HEK293 (cell line): ENCODE measurements at regions of chr16 and their contacts with region 1.

Region 1: GRCh38 chr16:10579965-10580882 is at the start of gene EMP2:
- H3K4me3 ChIP-seq: peak within 1 kb of the TSS; percentile 74
- H3K27ac ChIP-seq: peak within 1 kb of the TSS; percentile 74; the same call in 1 of the 2 replicates
- H3K4me1 ChIP-seq: peaks cover 5% of the 10 kb centered on the region; the same call in 1 of the 2 replicates
- CTCF ChIP-seq: peak; percentile 75

Region 2: DNA sequence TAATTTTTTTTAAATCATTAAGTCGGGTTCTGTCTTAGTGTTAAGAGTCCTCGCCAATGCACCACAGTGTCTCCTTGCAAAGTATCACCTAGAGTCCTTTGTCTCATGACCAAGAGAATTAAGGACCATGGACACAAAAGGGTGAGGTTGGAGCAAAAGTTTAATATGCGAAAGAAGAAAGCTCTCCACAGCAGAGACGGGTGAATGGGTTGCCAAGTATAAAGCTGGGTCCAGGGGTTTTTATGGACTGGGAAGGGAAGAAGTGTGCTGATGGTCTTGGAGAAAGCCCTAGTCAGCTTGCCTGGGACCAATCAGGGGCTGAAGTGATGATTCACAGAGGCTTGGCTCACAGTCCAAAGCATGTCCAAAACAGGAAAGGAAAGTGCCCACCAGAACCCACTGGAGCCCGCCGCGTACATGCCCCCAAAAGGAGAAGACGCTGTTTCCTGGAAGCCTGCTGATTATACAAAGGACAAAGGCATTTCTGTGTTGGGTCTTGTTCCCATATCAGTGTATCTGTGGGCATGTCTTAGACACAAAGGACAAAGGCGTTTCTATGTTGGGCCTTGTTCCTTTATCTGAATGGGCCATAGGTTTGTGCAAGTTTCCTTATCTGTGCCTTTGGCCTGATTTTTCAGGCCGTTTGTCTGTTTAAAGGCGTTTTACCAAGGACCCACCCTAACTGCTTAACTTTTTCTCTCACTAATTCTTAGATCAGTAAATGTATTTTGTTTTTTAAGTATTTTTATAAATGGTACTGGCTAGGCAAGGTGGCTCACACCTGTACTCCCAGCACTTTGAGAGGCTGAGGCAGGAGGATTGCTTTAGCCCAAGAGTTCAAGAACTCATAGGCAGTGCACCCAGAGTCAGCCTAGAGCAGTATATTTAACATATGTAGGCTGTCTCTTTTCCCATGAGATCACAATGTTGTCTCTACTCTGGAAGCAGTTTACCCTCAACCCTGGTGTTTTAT is 223.1 kb before region 1 on chr16:
- CTCF ChIA-PET with region 1: no interaction called
- POLR2A ChIA-PET with region 1: no interaction called
- H3K4me3 ChIP-seq: no peak overlapping the region
- H3K27ac ChIP-seq: no peak overlapping the region
- H3K4me1 ChIP-seq: no peaks in the 10 kb centered on the region
- CTCF ChIP-seq: no peak

Region 3: DNA sequence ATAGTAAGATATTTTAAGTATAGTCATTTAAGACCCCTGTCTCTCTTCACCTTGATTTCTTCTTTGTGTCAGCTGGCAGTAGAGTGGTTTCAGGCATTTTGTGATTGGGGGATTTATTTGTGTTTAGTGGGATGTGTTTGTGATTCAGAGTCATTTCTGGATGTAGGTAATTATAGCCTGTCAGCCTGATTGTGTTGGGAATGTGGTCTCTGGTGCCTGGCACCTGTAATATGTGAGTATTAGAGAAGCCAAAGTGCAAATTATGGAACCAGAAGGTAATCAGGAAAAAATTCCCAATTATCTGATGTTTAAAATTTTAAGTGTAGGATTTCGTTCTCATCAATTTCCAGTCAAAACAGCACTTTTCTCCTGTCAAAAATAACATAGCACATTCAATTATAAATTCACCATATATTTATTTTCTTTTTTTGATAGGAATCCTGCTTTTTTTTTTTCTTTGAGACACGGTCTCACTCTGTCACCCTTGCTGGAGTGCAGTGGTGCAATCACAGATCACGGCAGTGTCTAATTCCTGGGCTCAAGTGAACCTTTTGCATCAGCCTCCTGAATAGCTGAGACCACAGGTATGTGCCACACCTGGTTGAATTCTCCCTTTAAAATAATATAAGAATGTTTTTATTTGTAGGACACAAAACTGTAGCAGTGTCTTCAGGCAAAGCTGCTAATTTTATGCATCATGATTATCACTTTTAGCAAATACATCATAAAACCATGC is 151.6 kb before region 1 on chr16:
- CTCF ChIA-PET with region 1: no interaction called
- POLR2A ChIA-PET with region 1: no interaction called
- H3K4me3 ChIP-seq: no peak overlapping the region
- H3K27ac ChIP-seq: no peak overlapping the region
- H3K4me1 ChIP-seq: no peaks in the 10 kb centered on the region
- CTCF ChIP-seq: no peak

Region 4: DNA sequence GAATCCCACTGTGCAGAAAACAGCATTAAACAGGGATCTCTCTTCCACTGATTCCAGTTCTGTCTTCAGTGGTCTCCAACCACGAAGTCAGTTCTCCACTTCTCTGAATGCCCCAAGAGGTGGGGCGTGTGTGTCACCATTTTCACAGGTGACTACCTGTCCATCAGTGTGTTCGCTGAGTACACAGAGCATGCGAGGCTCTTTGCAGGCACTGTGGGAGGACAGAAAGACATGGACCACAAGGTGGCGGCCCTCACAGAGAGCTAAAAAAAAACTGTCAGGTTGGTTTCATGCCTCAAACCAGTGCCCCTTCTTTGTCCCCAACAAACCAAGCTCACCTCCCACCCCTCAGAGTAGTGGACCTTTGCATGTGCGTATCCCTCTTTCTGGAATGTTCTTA is 13.6 kb before region 1 on chr16:
- CTCF ChIA-PET with region 1: interaction called, 11 read pairs
- POLR2A ChIA-PET with region 1: interaction called, 3 read pairs
- H3K4me3 ChIP-seq: no peak overlapping the region
- H3K27ac ChIP-seq: no peak overlapping the region
- H3K4me1 ChIP-seq: no peaks in the 10 kb centered on the region
- CTCF ChIP-seq: no peak

Region 5: DNA sequence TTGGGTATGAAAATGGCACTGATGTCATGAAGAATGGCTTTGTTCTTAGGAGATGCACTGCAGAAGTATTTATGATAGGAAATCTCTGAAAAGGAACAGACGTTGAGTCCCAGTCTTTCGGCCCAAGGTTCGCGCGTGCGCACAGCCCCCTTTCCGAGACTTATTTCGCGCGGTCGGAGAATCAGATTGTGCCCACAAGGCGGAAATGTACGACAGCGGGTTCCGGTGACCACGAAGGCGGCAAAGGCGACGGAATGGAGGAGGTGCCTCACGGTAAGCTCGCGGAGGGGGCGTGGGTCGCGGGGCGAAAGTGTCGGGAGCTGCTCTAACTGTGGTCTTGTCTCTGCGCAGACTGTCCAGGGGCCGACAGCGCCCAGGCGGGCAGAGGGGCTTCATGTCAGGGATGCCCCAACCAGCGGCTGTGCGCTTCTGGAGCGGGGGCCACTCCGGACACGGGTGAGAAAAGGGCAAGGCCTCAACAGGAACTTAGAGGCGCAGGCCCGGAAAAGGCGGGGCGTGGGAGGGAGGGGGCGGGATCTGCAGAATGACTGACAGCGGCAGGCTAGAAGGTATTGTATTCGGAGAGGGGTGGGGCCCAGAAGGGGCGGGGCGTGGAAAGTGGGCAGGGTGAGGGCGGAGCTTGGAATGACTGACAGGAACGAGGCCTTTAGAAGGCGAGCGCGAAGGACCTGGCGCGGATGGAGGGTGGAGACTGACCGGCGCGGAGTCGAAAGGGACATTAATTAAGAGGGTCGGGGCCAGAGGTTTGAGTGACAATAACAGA is 163.6 kb after region 1 on chr16 and contains the start of gene NUBP1:
- CTCF ChIA-PET with region 1: no interaction called
- POLR2A ChIA-PET with region 1: interaction called, 10 read pairs
- H3K4me3 ChIP-seq: peak within 1 kb of the TSS; percentile 80
- H3K27ac ChIP-seq: peak within 1 kb of the TSS; percentile 88
- H3K4me1 ChIP-seq: no peaks in the 10 kb centered on the region; the same call in 1 of the 2 replicates
- CTCF ChIP-seq: no peak

Region 6: DNA sequence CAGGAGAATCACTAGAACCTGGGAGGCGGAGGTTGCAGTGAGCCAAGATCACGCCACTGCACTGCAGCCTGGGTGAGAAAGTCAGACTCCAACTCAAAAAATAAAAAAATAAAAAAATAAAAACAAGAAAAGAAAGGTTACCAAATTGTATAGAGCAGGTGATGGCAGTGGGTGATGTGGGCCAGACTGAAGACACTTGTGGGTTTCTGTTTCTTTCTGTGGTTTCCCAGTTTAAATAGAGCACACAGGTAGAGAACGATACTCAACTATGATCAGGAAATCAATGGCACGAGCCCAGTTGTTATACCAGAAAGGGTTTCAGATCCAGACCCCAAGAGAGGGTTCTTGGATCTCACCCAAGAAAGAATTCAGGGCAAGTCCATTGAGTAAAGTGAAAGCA is 196.1 kb after region 1 on chr16:
- CTCF ChIA-PET with region 1: no interaction called
- POLR2A ChIA-PET with region 1: no interaction called
- H3K4me3 ChIP-seq: no peak overlapping the region
- H3K27ac ChIP-seq: no peak overlapping the region
- H3K4me1 ChIP-seq: no peaks in the 10 kb centered on the region
- CTCF ChIP-seq: no peak